ENCODE measurements at regions of chr12 and their contacts with region 1.

Region 1: GRCh38 chr12:47133981-47134380 is 54.2 kb upstream of the AMIGO2 start:
- DNase-seq: no peak
- H3K4me3 ChIP-seq: no peak overlapping the region
- H3K4me3 Mint-ChIP-seq: no peak overlapping the region
- H3K27ac Mint-ChIP-seq: no peak overlapping the region
- H3K4me1 ChIP-seq: no peaks in the 10 kb centered on the region
- H3K4me1 Mint-ChIP-seq: peaks cover 6% of the 10 kb centered on the region
- H3K27me3 ChIP-seq: no peaks in the 10 kb centered on the region
- H3K27me3 Mint-ChIP-seq: peaks cover 1% of the 10 kb centered on the region
- CTCF ChIP-seq: no peak

Region 2: GRCh38 chr12:47085815-47086252 is 48.1 kb before region 1 on chr12:
- CTCF ChIA-PET with region 1: no interaction called
- POLR2A ChIA-PET with region 1: no interaction called
- intact Hi-C with region 1: loop called (anchors 5 kb)
- DNase-seq: no peak
- H3K4me3 ChIP-seq: no peak overlapping the region
- H3K4me3 Mint-ChIP-seq: no peak overlapping the region
- H3K27ac Mint-ChIP-seq: no peak overlapping the region
- H3K4me1 ChIP-seq: peaks cover 12% of the 10 kb centered on the region; the same call in 1 of the 2 replicates
- H3K4me1 Mint-ChIP-seq: peaks cover 22% of the 10 kb centered on the region
- H3K27me3 ChIP-seq: no peaks in the 10 kb centered on the region
- H3K27me3 Mint-ChIP-seq: no peaks in the 10 kb centered on the region
- CTCF ChIP-seq: no peak

Region 3: DNA sequence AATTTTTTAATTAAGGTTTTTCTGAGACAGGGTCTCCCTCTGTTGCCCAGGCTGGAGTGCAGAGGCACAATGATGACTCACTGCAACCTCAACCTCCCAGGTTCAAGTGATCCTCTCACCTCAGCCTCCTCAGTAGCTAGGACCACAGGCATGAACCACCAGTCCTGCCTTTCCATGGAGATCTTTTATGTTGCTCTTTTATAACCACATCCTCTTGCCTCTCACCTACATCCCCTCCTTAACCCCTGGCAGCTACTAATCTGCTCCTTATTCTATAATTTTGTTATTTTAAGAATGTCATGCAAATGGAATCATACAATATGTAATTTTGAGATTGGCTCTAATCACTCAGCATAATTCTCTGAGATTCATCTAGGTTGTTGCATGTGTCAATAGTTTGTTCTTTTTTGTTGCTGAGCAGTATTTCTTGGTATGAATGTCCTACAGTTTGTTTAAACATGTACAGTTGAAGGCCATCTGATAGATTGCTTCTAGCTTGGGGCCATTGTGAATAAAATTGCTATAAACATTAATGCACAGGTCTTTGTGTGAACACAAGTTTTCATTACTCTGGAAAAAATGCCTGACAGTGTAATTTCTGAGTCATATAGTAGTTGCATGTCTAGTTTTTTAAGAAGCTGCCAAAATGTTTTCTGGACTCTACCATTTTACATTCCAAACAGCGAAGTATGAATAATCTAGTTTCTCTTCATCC is 195.0 kb after region 1 on chr12:
- CTCF ChIA-PET with region 1: no interaction called
- POLR2A ChIA-PET with region 1: no interaction called
- intact Hi-C with region 1: no loop called
- DNase-seq: no peak
- H3K4me3 ChIP-seq: no peak overlapping the region
- H3K4me3 Mint-ChIP-seq: no peak overlapping the region
- H3K27ac Mint-ChIP-seq: no peak overlapping the region
- H3K4me1 ChIP-seq: no peaks in the 10 kb centered on the region
- H3K4me1 Mint-ChIP-seq: no peaks in the 10 kb centered on the region
- H3K27me3 ChIP-seq: no peaks in the 10 kb centered on the region
- H3K27me3 Mint-ChIP-seq: no peaks in the 10 kb centered on the region
- CTCF ChIP-seq: no peak

Measured in Caco-2 (cell line).